ENCODE measurements at regions of chrX and their contacts with region 1.

Region 1: GRCh38 chrX:152520653-152521052 is 69.5 kb upstream of the GABRA3 start:
- DNase-seq: no peak
- ATAC-seq: no peak
- H3K4me3 Mint-ChIP-seq: no peak overlapping the region
- H3K27ac Mint-ChIP-seq: no peak overlapping the region
- H3K4me1 Mint-ChIP-seq: no peaks in the 10 kb centered on the region
- H3K27me3 Mint-ChIP-seq: peaks cover 2% of the 10 kb centered on the region

Region 2: GRCh38 chrX:152428125-152428524 is 92.5 kb before region 1 on chrX:
- CTCF ChIA-PET with region 1: no interaction called
- POLR2A ChIA-PET with region 1: no interaction called
- intact Hi-C with region 1: no loop called
- DNase-seq: no peak
- ATAC-seq: no peak
- H3K4me3 Mint-ChIP-seq: no peak overlapping the region
- H3K27ac Mint-ChIP-seq: no peak overlapping the region
- H3K4me1 Mint-ChIP-seq: no peaks in the 10 kb centered on the region
- H3K27me3 Mint-ChIP-seq: no peaks in the 10 kb centered on the region

Region 3: GRCh38 chrX:152599138-152599537 is 78.5 kb after region 1 on chrX:
- CTCF ChIA-PET with region 1: no interaction called
- POLR2A ChIA-PET with region 1: no interaction called
- intact Hi-C with region 1: loop called in 1 of 2 experiments (anchors 2 kb)
- DNase-seq: no peak
- ATAC-seq: no peak
- H3K4me3 Mint-ChIP-seq: no peak overlapping the region
- H3K27ac Mint-ChIP-seq: no peak overlapping the region
- H3K4me1 Mint-ChIP-seq: no peaks in the 10 kb centered on the region
- H3K27me3 Mint-ChIP-seq: peaks cover 7% of the 10 kb centered on the region